ENCODE measurements at regions of chr14 and their contacts with region 1.

Region 1: DNA sequence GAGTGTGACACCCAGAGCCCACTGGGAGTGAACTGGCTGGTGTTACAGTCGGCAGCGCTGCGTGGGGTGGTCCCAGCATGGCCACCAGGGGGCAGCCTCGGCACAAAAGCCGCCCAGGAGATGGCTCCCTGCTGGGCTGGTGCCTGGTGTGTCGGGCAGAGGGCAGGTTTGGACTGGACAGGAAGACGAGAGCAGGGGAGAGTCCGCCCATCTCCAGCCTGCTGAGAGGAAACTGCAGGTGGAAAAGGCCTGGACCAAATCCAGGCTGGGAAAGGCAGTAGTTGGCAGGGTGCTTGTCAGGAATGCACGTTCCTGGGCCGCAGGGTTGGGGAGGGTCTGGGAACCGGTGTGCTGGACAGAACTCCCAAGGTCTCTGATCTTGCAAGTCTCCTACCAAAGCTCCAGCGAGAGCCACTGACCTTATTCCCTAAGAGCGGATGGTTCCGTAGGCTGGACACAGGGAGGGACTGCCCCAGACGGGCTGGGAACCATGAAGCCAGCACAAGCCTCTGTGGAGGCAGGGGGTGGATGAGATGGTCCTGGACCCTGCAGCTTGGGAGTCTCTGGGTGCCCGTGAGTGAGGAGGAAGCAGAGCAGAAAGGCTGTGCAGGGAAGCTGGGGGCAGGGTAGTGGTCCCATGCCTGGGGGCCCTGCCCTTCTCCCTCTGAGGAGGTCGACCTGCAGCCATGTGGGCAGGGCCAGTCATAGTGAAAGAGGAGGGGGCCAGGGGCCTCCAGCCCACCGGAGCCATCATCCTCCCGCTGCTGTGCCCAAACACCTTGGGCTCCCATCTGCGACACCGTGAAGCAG is 1.8 kb downstream of the AHNAK2 start:
- DNase-seq: peak; percentile 92
- H3K4me3 ChIP-seq: peak overlapping the region in 1 of 4 donors; percentile 67
- H3K27ac ChIP-seq: peak overlapping the region; percentile 90 to 97 (median 96)
- H3K4me1 ChIP-seq: peaks cover 0 to 91% (median 86%) of the 10 kb centered on the region in 4 donors
- H3K27me3 ChIP-seq: no peaks in the 10 kb centered on the region
- CTCF ChIP-seq: peak; percentile 92 to 94 (median 92)
- EP300 ChIP-seq: no peak
- POLR2A ChIP-seq: no peak

Region 2: GRCh38 chr14:104895786-104896661 is 80.4 kb before region 1 on chr14:
- intact Hi-C with region 1: loop called (anchors 2 kb)
- DNase-seq: peak; percentile 65
- H3K4me3 ChIP-seq: no peak overlapping the region
- H3K27ac ChIP-seq: peak overlapping the region in 1 of 4 donors; percentile 20
- H3K4me1 ChIP-seq: peaks cover 0 to 20% (median 18%) of the 10 kb centered on the region in 4 donors
- H3K27me3 ChIP-seq: no peaks in the 10 kb centered on the region
- CTCF ChIP-seq: no peak
- EP300 ChIP-seq: no peak
- POLR2A ChIP-seq: no peak